Heart left ventricle (tissue), 16 donors: ENCODE measurements at regions of chr10 and their contacts with region 1.

Region 1: GRCh38 chr10:31526681-31527080 is 207.7 kb downstream of the ZEB1 start:
- DNase-seq: no peak
- ATAC-seq: peak in 2 of 4 donors; percentile 32 to 56
- H3K4me3 ChIP-seq: no peak overlapping the region
- H3K27ac ChIP-seq: peak overlapping the region in 6 of 12 donors; percentile 2 to 49 (median 26)
- H3K4me1 ChIP-seq: peaks cover 0 to 28% (median 9%) of the 10 kb centered on the region in 12 donors
- H3K27me3 ChIP-seq: no peaks in the 10 kb centered on the region
- CTCF ChIP-seq: no peak
- POLR2A ChIP-seq: no peak

Region 2: GRCh38 chr10:31581741-31582313 is 55.1 kb after region 1 on chr10:
- intact Hi-C with region 1: loop called in 1 of 10 experiments (anchors 5 kb)
- DNase-seq: peak in 3 of 5 donors; percentile 23 to 38 (median 28)
- ATAC-seq: peak; percentile 27 to 53 (median 34)
- H3K4me3 ChIP-seq: peak overlapping the region in 1 of 12 donors; percentile 8
- H3K27ac ChIP-seq: peak overlapping the region in 10 of 12 donors; percentile 2 to 77 (median 49)
- H3K4me1 ChIP-seq: peaks cover 8 to 50% (median 28%) of the 10 kb centered on the region in 12 donors
- H3K27me3 ChIP-seq: no peaks in the 10 kb centered on the region
- CTCF ChIP-seq: no peak
- POLR2A ChIP-seq: no peak

Region 3: DNA sequence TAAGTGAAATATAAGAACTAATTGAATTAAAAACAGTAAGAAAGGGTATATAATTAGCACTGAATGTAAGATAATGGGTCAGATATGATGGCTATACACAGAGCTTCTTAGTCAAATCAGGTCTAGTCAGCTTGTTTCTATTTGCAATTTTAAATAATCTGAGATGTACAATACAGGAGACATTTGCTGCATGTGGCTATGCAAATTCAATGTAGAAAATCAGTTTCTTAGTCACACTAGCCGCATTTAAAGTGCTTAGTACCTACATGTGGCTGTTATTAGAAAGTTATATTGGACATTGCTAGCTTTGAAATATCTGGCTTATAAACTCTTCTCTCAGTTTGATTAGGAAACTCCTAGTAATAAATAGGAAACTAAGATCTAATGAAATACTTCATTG is 944.6 kb after region 1 on chr10:
- intact Hi-C with region 1: no loop called
- DNase-seq: no peak
- ATAC-seq: no peak
- H3K4me3 ChIP-seq: no peak overlapping the region
- H3K27ac ChIP-seq: no peak overlapping the region
- H3K4me1 ChIP-seq: no peaks in the 10 kb centered on the region
- H3K27me3 ChIP-seq: no peaks in the 10 kb centered on the region
- CTCF ChIP-seq: no peak
- POLR2A ChIP-seq: no peak